ENCODE measurements at regions of chr5 and their contacts with region 1.

Region 1: DNA sequence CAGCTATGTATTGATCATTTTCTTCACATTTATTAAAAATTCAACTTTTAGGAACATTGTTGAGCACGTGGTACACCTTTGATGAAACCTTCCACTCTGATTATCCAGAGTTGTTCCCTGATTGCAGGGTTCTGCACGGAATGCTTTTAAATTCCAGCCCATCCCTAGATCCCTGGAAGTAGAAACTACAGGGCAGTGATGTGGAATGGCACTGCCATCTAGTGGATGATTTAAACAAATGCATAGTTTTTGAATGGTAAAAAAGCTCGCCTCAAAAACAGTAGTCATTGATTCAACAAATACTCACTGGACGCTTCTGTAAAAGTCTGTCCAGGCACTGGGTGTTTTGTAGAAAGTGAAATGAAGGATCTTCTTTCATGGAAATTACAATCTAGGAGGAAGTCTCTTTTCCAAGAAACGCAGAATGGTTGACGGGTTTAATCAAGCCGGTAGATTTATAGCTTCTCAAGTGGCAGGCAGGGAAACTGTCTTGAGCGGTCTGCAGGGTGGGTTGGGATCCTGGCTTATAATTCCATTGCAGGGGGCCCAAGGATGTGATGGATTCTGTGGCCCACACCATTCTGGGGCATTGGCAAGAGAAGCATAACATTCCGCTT is 118.4 kb downstream of the ARHGAP26 start:
- DNase-seq: peak; percentile 42
- H3K4me3 ChIP-seq: no peak overlapping the region
- H3K27ac ChIP-seq: no peak overlapping the region
- H3K4me1 ChIP-seq: no peaks in the 10 kb centered on the region
- CTCF ChIP-seq: peak; percentile 93

Region 2: GRCh38 chr5:141849375-141850243 is 1039.0 kb before region 1 on chr5:
- CTCF ChIA-PET with region 1: interaction called, 19 read pairs
- POLR2A ChIA-PET with region 1: no interaction called
- intact Hi-C with region 1: no loop called
- DNase-seq: peak; percentile 87
- H3K4me3 ChIP-seq: peak overlapping the region; percentile 71
- H3K27ac ChIP-seq: peak overlapping the region; percentile 83
- H3K4me1 ChIP-seq: peaks cover 45% of the 10 kb centered on the region
- CTCF ChIP-seq: peak; percentile 26; the same call in 1 of the 2 replicates

Region 3: GRCh38 chr5:142611154-142611553 is 277.4 kb before region 1 on chr5:
- CTCF ChIA-PET with region 1: no interaction called
- POLR2A ChIA-PET with region 1: no interaction called
- intact Hi-C with region 1: loop called (anchors 2 kb)
- DNase-seq: peak; percentile 36
- H3K4me3 ChIP-seq: no peak overlapping the region
- H3K27ac ChIP-seq: no peak overlapping the region
- H3K4me1 ChIP-seq: no peaks in the 10 kb centered on the region
- CTCF ChIP-seq: peak; percentile 71

Region 4: GRCh38 chr5:143837306-143837848 is 948.8 kb after region 1 on chr5:
- CTCF ChIA-PET with region 1: no interaction called
- POLR2A ChIA-PET with region 1: no interaction called
- intact Hi-C with region 1: no loop called
- DNase-seq: no peak
- H3K4me3 ChIP-seq: no peak overlapping the region
- H3K27ac ChIP-seq: no peak overlapping the region
- H3K4me1 ChIP-seq: no peaks in the 10 kb centered on the region
- CTCF ChIP-seq: no peak

Measured in OCI-LY7 (cell line).